ENCODE measurements at regions of chr17 and their contacts with region 1.

Region 1: DNA sequence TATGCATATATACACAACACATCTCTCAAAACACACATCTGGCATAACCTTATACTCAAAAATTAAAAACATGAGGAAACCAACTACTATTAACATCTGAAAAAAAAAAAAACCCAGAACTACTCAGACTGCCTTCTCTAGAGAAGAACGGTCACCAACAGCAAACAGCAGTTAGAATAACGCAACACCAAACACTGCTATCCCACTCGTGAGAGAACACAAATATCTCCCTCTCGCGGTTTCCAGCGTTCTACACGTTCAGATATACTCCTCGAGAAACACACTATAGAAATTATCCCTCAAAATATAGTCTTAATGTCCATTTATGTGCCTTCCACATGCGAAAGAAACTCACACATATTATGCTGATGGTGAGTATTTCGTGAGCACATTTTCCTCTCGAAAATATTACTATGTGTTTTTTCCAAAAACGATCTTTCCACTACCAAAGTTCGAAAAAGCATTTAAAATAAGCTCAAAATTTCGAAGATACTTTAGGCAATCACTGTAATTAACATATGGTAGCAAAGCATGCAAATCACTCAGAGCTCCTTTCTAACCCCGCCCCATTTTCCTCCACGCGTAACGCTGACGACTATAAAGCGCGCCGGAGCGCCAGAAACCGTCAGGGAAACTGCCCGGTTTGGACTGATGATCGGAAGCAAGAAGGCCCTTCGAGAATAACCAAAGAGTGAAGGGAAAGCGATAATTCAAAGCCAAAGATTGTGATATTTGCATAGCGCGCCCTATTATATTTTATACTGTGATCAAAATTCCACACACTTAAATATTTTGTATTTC is 60.1 kb downstream of the TEX14 start:
- DNase-seq: peak; percentile 95
- H3K4me3 ChIP-seq: peak overlapping the region; percentile 37 to 47 (median 45)
- H3K27ac ChIP-seq: peak overlapping the region; percentile 100
- H3K4me1 ChIP-seq: peaks cover 4% of the 10 kb centered on the region
- H3K27me3 ChIP-seq: no peaks in the 10 kb centered on the region
- CTCF ChIP-seq: peak; percentile 8 to 43

Region 2: GRCh38 chr17:58417300-58418092 is 214.2 kb before region 1 on chr17 and contains the start of gene RNF43:
- CTCF ChIA-PET with region 1: no interaction called
- dilution Hi-C with region 1: no loop called
- in situ Hi-C with region 1: no loop called
- intact Hi-C with region 1: loop called (anchors 10 kb)
- DNase-seq: peak; percentile 98
- H3K4me3 ChIP-seq: peak within 1 kb of the TSS; percentile 63 to 86 (median 75)
- H3K27ac ChIP-seq: peak within 1 kb of the TSS; percentile 86
- H3K4me1 ChIP-seq: peaks cover 10% of the 10 kb centered on the region
- H3K27me3 ChIP-seq: peaks cover 3% of the 10 kb centered on the region
- CTCF ChIP-seq: peak; percentile 87 to 98
- total RNA-seq, gene RNF43: 9.3 to 11.4 TPM

Region 3: GRCh38 chr17:58587702-58588254 is 43.9 kb before region 1 on chr17:
- CTCF ChIA-PET with region 1: no interaction called
- dilution Hi-C with region 1: no loop called
- in situ Hi-C with region 1: no loop called
- intact Hi-C with region 1: loop called (anchors 1 kb)
- DNase-seq: peak; percentile 32
- H3K4me3 ChIP-seq: no peak overlapping the region
- H3K27ac ChIP-seq: no peak overlapping the region
- H3K4me1 ChIP-seq: peaks cover 9% of the 10 kb centered on the region
- H3K27me3 ChIP-seq: no peaks in the 10 kb centered on the region
- CTCF ChIP-seq: peak; percentile 87 to 98

Region 4: DNA sequence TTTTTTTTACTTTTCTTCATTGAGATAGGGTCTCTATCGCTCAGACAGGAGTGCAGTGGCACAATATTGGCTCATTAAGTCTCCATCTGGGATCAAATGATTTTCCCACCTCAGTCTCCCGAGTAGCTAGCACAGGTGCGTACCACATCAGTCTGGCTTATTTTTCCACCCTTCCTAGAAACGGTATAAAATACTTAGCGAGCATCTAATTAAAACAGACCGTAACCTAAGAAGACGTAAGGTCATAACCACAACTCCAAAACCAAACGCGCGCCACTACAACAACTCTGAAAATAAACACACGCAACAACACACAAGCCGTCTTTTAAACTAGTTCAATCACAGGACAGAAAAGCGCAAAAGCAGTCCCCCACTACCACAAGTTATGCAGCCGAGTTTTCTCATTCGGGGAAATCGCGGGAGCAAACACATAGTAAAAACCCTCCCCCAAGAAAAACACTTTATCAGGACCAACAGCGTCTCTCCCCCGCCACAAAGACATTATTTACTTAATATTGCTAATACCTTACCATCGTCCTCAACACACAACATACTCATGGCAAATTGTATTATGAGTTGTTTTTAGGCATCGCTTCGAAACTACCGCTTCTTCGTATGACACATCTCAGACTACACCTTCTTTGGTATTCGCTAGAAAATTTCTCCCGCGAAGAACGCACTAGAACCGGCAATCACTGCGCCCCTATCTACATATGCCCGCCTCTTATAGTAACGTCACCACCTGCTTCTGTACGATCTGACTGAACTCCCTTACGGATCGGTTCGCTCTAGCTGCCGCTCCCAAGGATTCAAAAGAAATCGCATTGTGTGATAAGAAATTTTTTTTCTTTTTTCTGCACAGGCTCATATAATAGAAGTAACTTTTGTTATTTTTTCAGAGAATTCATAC is 27.3 kb after region 1 on chr17:
- CTCF ChIA-PET with region 1: interaction called, 3 read pairs
- dilution Hi-C with region 1: no loop called
- in situ Hi-C with region 1: no loop called
- intact Hi-C with region 1: loop called (anchors 1 kb)
- DNase-seq: peak; percentile 99
- H3K4me3 ChIP-seq: peak overlapping the region; percentile 22 to 40 (median 31)
- H3K27ac ChIP-seq: peak overlapping the region; percentile 99
- H3K4me1 ChIP-seq: no peaks in the 10 kb centered on the region
- H3K27me3 ChIP-seq: no peaks in the 10 kb centered on the region
- CTCF ChIP-seq: no peak

Region 5: DNA sequence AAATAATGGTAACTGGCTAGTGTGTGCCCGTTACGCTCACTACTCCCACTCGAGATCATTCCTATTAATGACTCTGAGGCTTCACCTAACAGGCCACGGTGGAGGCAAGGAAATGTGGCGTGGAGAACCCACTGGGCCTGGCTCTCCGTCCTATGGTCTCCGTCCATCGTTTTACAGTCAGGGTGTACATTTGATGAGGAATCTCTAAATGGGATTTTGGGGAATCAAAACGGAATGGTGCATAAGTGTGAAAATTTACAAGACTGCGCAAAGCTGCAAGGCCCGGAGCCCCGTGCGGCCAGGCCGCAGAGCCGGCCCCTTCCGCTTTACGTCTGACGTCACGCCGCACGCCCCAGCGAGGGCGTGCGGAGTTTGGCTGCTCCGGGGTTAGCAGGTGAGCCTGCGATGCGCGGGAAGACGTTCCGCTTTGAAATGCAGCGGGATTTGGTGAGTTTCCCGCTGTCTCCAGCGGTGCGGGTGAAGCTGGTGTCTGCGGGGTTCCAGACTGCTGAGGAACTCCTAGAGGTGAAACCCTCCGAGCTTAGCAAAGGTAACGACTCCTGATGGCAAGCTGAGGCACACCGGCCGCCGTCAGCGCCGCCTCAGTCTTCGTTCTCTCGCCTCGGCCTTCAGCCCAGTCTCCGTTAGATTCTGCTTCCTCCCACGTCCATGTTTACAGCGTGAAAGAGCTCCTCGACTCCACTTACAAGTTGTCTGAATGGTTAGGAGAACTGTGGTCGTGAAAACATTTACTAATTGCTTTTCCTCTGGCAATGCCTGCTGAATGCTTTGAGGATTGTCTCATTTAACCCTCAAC is 60.7 kb after region 1 on chr17 and contains the start of gene RAD51C:
- CTCF ChIA-PET with region 1: no interaction called
- dilution Hi-C with region 1: no loop called
- in situ Hi-C with region 1: no loop called
- intact Hi-C with region 1: loop called (anchors 1 kb)
- DNase-seq: peak; percentile 81
- H3K4me3 ChIP-seq: peak within 1 kb of the TSS; percentile 52 to 85 (median 74)
- H3K27ac ChIP-seq: peak within 1 kb of the TSS; percentile 76
- H3K4me1 ChIP-seq: peaks cover 11% of the 10 kb centered on the region
- H3K27me3 ChIP-seq: no peaks in the 10 kb centered on the region
- CTCF ChIP-seq: no peak
- total RNA-seq, gene RAD51C: 20.8 to 55.6 TPM

Region 6: DNA sequence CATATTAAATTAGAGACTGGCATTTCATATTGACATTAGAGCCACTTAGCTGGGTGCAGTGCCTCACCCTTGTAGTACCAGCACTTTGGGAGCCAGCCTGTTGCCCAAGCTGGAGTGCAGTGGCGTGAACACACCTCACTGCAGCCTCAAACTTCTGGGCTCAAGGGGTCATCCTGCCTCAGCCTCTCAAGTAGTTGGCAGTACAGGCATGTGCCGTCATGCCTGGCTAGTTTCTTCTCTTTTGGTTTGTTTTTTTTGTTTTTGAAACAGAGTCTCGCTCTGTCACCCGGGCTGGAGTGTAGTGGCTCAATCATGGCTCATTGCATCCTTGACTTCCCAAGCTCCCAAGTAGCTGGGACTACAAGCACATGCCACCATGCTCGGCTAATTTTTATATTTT is 132.7 kb after region 1 on chr17:
- CTCF ChIA-PET with region 1: no interaction called
- dilution Hi-C with region 1: no loop called
- in situ Hi-C with region 1: no loop called
- intact Hi-C with region 1: no loop called
- DNase-seq: no peak
- H3K4me3 ChIP-seq: no peak overlapping the region
- H3K27ac ChIP-seq: no peak overlapping the region
- H3K4me1 ChIP-seq: peaks cover 6% of the 10 kb centered on the region
- H3K27me3 ChIP-seq: no peaks in the 10 kb centered on the region
- CTCF ChIP-seq: no peak

Measured in mammary epithelial cell (primary cell).